ENCODE measurements at regions of chr11 and their contacts with region 1.

Region 1: GRCh38 chr11:130124096-130124495 is 35.5 kb upstream of the ST14 start:
- DNase-seq: peak; percentile 89
- ATAC-seq: peak; percentile 94
- H3K4me3 ChIP-seq: no peak overlapping the region
- H3K27ac ChIP-seq: peak overlapping the region; percentile 13; the same call in 1 of the 2 replicates
- H3K4me1 ChIP-seq: peaks cover 5% of the 10 kb centered on the region
- H3K27me3 ChIP-seq: no peaks in the 10 kb centered on the region; the same call in 1 of the 2 replicates
- CTCF ChIP-seq: no peak
- POLR2A ChIP-seq: no peak
- RAD21 ChIP-seq: no peak

Region 2: GRCh38 chr11:129504956-129505665 is 619.0 kb before region 1 on chr11:
- CTCF ChIA-PET with region 1: no interaction called
- POLR2A ChIA-PET with region 1: no interaction called
- dilution Hi-C with region 1: no loop called
- in situ Hi-C with region 1: no loop called
- intact Hi-C with region 1: loop called (anchors 5 kb)
- DNase-seq: no peak
- ATAC-seq: no peak
- H3K4me3 ChIP-seq: no peak overlapping the region
- H3K27ac ChIP-seq: no peak overlapping the region
- H3K4me1 ChIP-seq: no peaks in the 10 kb centered on the region
- H3K27me3 ChIP-seq: no peaks in the 10 kb centered on the region
- CTCF ChIP-seq: no peak
- POLR2A ChIP-seq: no peak
- RAD21 ChIP-seq: no peak

Region 3: GRCh38 chr11:130103296-130103814 is 20.7 kb before region 1 on chr11:
- CTCF ChIA-PET with region 1: no interaction called
- POLR2A ChIA-PET with region 1: no interaction called
- dilution Hi-C with region 1: no loop called
- in situ Hi-C with region 1: no loop called
- intact Hi-C with region 1: loop called (anchors 2 kb)
- DNase-seq: peak; percentile 96
- ATAC-seq: peak; percentile 99
- H3K4me3 ChIP-seq: no peak overlapping the region
- H3K27ac ChIP-seq: no peak overlapping the region
- H3K4me1 ChIP-seq: peaks cover 5% of the 10 kb centered on the region
- H3K27me3 ChIP-seq: peaks cover 25% of the 10 kb centered on the region
- CTCF ChIP-seq: no peak
- POLR2A ChIP-seq: no peak
- RAD21 ChIP-seq: no peak